GM13976 (cell line): ENCODE measurements at regions of chr22 and their contacts with region 1.

Region 1: GRCh38 chr22:42437488-42438292 is 5.5 kb upstream of the NFAM1 start:
- DNase-seq: peak; percentile 87
- CTCF ChIP-seq: peak; percentile 94

Region 2: GRCh38 chr22:41966607-41967240 is 471.0 kb before region 1 on chr22:
- in situ Hi-C with region 1: loop called (anchors 25 kb)
- DNase-seq: peak; percentile 74
- CTCF ChIP-seq: peak; percentile 0

Region 3: DNA sequence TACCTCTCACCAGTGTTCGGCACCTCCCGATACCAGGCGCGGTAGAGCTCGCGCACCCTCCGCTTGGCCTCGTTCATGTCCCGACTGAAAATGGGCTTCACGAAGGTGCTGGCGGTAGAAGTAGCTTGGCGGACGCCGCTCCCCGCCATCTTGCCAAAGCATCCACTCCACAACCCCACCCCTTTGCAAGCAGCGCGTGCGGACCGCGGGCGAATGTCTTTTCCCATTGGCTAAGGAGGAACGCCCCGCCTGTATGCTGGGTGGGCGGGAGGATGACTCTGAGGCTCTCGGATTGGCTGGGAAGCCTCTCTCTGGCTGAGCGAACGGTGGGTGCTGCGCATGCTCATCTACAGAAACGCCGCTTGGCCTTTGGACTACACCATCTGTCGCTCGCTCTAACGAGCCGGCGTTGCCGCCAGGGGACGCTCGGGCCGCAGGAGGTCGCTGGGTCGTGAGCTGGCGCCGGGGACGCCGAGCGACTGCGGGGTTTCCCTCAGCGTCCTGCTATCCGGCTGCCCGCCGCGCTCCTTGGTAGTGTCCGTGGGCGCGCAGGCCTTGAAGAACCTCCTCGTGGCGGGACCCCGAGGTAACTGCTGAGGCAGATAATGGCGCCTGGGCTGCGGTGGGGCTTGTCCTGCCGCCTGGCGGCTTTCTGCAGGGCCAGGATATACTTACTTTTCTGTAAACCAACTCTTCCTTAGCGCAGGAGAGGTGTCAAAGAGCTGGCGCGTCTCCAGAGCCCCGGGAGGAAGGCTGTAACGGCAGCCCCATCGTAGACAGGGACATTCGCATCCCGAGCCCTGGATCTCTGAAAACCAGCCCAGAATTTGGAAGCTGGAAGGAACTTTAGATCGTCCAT is 346.9 kb before region 1 on chr22 and contains the start of gene NDUFA6:
- in situ Hi-C with region 1: loop called (anchors 10 kb)
- DNase-seq: peak; percentile 99
- CTCF ChIP-seq: peak; percentile 99

Region 4: DNA sequence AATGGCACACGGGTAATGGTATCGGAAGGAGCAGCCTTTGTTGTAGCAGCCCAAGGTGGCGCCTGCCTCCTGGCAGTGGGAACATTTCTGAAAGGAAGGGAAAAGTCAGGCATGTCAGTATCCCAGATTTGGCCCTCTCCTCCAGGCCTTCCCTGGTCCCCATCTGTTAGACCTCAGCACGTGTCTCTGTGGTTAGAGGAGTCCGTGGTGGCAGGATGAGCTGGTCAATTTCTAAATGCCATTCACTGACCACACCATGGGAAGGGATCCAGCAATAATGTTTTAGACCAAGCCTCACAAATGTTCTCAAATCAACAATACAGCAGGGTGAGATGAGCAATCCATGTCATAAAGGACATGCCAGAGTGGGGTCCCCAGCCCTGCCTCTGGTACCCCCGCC is 258.1 kb before region 1 on chr22:
- in situ Hi-C with region 1: loop called (anchors 10 kb)
- DNase-seq: no peak
- CTCF ChIP-seq: no peak

Region 5: GRCh38 chr22:42500161-42500835 is 62.6 kb after region 1 on chr22:
- in situ Hi-C with region 1: no loop called
- DNase-seq: peak; percentile 100
- CTCF ChIP-seq: no peak

Region 6: DNA sequence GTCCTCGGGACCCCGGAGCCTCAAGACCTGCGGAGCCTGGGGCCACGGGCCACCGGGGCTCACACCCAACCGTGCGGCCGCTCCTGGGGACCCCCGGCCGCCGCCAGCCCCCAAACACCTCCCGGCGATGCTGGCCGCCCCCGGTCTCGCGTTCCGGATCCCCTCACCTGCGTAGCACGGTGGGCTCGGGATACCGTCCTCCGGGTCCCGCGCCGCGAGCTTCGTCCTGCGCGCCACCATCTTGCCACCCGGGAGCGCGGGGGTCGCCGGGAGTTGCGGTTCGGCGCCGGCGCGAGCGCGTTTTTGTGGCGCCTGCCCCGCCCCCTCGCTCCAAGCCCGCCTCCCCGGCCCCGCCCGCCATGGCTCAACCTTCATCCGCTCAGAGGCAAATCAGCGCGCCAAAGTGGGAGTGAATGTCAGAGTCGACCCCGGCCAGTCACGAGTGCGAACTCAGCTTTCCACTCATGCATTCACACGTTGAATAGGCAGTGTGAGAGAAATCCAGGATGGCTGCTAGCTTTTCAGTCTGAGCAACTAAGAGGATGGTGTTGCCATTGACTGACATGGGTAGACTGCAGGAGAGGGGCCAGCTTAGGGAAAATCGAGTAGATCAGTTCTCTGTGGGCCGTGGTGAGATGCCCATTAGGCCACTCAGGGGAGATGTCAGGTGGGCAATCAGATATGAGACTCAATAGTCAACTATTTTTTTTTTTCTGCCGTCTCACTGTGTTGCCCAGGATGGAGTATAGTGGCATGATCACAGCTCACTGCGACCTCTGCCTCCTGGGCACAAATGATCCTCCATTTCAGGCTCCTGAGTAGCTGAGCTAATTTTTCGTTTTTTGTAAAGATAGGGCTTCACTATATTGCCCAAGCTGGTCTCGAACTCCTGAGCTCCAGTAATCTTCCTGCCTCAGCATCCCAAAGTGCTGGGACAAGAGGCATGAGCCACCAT is 144.3 kb after region 1 on chr22:
- in situ Hi-C with region 1: no loop called
- DNase-seq: peak; percentile 90
- CTCF ChIP-seq: no peak